Activated T-helper 2 cell treated with anti-CD3 and anti-CD28 coated beads, Interferon-gamma antibody, Interleukin-2, Interleukin-4, amounts not matched to agents 10 μg/mL and 5 μg/mL and 100 μg/mL, durations not matched to agents 14 hours and 24 hours and 36 hours (primary cell): ENCODE measurements at regions of chr16 and their contacts with region 1.

Region 1: GRCh38 chr16:69754469-69755310 is at the start of gene NOB1:
- DNase-seq: peak; percentile 97
- H3K4me3 Mint-ChIP-seq: peak within 1 kb of the TSS; percentile 98
- H3K27ac Mint-ChIP-seq: peak within 1 kb of the TSS; percentile 96
- H3K4me1 Mint-ChIP-seq: peaks cover 22% of the 10 kb centered on the region
- H3K27me3 Mint-ChIP-seq: no peaks in the 10 kb centered on the region
- total RNA-seq, gene NOB1: 106 and 109 TPM in 2 replicates

Region 2: GRCh38 chr16:69339289-69340108 is 415.2 kb before region 1 on chr16 and contains the starts of genes COG8 and NIP7:
- intact Hi-C with region 1: loop called (anchors 5 kb)
- DNase-seq: peak; percentile 91
- H3K4me3 Mint-ChIP-seq: peak within 1 kb of the TSS; percentile 98
- H3K27ac Mint-ChIP-seq: peak within 1 kb of the TSS; percentile 96
- H3K4me1 Mint-ChIP-seq: peaks cover 31% of the 10 kb centered on the region
- H3K27me3 Mint-ChIP-seq: no peaks in the 10 kb centered on the region
- total RNA-seq, gene COG8: 41.5 and 42.9 TPM in 2 replicates
- total RNA-seq, gene NIP7: 60.5 and 60.8 TPM in 2 replicates

Region 3: GRCh38 chr16:69660166-69660565 is 94.5 kb before region 1 on chr16:
- intact Hi-C with region 1: no loop called
- DNase-seq: no peak
- H3K4me3 Mint-ChIP-seq: no peak overlapping the region
- H3K27ac Mint-ChIP-seq: no peak overlapping the region
- H3K4me1 Mint-ChIP-seq: no peaks in the 10 kb centered on the region
- H3K27me3 Mint-ChIP-seq: no peaks in the 10 kb centered on the region

Region 4: DNA sequence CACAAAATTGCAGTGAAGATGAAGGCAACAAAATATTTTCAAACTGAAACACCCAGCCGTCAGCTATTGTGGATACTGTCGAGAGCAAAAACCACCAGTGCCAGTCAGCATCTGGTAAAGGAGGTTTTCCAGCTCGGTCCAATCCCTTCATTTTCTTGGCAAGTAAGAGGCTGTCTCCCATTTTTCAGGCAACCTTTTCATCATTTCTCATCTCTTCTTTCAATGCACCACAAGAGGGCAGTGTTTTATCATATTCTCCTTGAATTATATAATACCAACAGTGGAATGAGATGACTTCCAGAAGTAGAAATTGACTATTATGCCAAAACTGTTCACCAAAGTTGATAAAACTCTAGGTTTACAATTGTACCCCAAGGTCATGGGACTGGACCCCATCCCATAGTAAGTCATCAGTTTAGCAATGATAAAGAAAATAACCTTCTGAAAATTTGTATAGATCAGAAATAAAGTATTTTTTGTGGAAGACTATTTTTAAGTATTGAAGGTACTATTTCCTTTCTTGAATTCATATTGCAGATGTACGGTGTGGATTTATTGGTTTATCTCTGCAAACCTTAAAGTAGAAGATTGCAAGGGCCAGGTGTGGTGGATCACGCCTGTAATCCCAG is 45.1 kb before region 1 on chr16:
- intact Hi-C with region 1: loop called (anchors 1 kb)
- DNase-seq: no peak
- H3K4me3 Mint-ChIP-seq: no peak overlapping the region
- H3K27ac Mint-ChIP-seq: no peak overlapping the region
- H3K4me1 Mint-ChIP-seq: peaks cover 6% of the 10 kb centered on the region
- H3K27me3 Mint-ChIP-seq: no peaks in the 10 kb centered on the region

Region 5: DNA sequence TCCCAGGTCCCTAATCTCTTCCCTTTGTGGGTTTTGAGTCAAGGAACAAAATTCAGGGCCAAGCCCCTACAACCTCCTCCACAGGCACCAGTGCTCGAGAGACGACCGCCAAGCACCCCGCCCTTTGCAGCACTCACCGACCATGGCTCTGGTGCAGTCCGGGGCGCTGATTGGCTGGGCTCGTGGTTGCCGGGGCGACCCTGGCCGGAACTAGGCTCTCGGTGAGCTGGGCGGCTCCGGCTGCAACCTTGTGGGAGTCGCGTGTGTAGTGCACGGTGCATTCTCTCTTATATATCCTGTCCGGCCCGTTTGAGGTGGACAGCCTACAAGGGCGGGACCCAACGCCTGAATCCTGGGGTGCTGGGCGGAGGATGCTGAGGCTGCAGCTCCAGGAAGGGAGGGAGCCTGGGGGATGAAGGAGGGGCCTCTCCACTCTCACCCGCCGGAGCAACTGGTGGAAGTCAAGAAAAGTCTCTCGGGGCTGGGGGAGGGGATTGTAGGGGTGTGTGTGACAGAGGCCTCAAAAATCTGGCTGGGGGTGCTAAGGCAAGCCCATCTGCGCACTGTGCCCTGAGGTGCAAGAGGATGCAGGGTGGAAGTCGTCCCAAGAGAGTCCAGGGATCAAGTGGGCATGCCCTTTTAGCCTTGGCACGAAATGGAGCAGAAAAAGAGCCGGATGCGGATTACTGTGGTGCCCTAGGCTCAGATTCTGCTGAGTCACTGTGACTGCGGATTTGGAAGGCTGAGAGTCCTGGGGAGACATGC is 28.2 kb before region 1 on chr16 and contains the start of gene NQO1:
- intact Hi-C with region 1: loop called (anchors 1 kb)
- DNase-seq: peak; percentile 90
- H3K4me3 Mint-ChIP-seq: peak within 1 kb of the TSS; percentile 91
- H3K27ac Mint-ChIP-seq: peak within 1 kb of the TSS; percentile 94
- H3K4me1 Mint-ChIP-seq: peaks cover 29% of the 10 kb centered on the region
- H3K27me3 Mint-ChIP-seq: no peaks in the 10 kb centered on the region
- total RNA-seq, gene NQO1: 9.0 and 9.2 TPM in 2 replicates